ENCODE measurements at regions of chr19 and their contacts with region 1.

Region 1: DNA sequence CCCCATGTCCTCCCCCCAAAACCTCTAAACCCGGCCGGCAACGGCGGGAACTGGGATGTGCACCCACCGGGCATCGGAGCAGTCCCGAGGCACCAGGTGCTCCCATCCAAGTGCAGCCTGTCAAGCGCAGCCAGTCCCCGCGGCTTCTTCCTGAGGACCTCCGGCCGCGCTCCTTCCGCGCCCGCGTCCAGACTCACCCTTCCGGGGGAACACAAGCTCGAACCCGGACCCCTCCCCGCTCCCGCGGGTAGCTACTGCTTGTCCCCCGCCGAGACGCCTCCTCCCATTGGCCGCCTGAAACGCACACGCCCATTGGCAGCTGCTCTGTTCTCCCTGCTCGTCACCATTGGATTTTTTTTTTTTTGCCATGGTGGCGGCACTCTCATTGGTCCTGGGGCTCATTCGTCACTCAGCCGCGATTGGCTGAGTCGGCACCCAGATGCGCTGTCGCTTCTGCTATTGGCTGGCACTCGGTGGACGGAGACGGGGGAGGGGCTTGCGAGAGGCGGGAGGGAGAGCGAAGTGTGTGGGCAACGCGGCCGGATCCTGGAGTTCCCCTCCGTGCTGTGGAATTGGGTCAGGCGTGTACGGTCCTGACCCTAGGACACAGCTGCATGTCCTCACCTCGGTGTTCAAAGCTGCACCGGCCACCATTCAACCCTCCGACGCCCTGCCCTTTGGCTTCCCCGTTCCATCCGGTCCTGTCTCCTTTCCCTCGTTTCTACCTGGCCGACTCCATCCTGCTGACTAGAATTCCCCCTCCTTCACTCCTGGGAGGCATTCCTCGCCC is at the start of gene TYK2:
- DNase-seq: peak; percentile 86 to 98 (median 96)
- ATAC-seq: peak; percentile 97 to 99
- H3K4me3 Mint-ChIP-seq: peak within 1 kb of the TSS; percentile 88 to 97 (median 94)
- H3K27ac Mint-ChIP-seq: peak within 1 kb of the TSS; percentile 85 to 98 (median 93)
- H3K4me1 Mint-ChIP-seq: peaks cover 8 to 29% (median 26%) of the 10 kb centered on the region in 4 donors
- H3K27me3 Mint-ChIP-seq: no peaks in the 10 kb centered on the region
- polyA plus RNA-seq, gene TYK2: 33.4 to 50.3 (median 43.9) TPM

Region 2: DNA sequence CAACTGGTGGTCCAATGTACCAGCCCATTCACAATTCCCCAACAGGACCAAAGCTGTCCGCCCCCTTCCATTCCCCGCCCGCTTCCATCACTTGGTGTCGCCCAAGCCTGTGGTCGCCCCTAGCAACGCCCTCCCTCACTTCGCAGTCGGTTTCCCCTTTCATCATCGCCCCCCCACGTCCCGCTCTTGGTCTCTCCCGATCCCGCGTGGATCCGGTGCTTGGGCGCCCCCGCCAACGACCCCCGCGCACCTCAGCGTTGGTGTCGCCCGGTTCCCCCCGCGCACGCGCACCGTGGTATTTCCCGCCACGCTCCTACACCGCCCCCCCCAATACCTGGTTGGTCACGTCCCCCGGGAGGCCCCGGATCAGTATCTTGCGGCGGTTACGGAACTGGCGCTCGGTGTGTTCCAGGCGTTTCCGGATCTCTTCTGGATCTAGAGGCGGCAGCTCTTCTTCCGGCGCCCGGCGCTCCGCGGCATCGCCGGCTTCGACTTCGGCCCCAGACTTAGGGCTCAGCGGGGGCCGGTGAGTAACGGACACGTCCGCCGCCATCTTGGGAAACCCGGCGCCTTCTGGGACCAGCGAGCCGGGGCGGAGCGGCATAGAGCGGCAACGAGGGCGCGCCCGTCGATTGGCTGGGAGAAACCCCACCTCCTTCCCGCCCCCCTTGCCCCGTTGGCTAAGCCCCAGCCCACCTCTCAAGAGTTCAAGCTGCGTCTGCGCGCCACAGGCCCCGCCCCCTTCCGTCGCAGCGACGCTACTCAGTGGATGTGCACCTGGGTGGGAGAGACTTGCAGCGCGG is 47.4 kb before region 1 on chr19 and contains the start of gene RAVER1:
- POLR2A ChIA-PET with region 1: interaction called, 13 read pairs
- DNase-seq: peak; percentile 95 to 99 (median 98)
- ATAC-seq: peak; percentile 93 to 95
- H3K4me3 Mint-ChIP-seq: peak within 1 kb of the TSS; percentile 93 to 97 (median 96)
- H3K27ac Mint-ChIP-seq: peak within 1 kb of the TSS; percentile 84 to 97 (median 96)
- H3K4me1 Mint-ChIP-seq: peaks cover 8 to 60% (median 43%) of the 10 kb centered on the region in 4 donors
- H3K27me3 Mint-ChIP-seq: no peaks in the 10 kb centered on the region
- polyA plus RNA-seq, gene RAVER1: 11.2 to 23.6 (median 17.5) TPM